ENCODE measurements at regions of chr19 and their contacts with region 1.

Region 1: DNA sequence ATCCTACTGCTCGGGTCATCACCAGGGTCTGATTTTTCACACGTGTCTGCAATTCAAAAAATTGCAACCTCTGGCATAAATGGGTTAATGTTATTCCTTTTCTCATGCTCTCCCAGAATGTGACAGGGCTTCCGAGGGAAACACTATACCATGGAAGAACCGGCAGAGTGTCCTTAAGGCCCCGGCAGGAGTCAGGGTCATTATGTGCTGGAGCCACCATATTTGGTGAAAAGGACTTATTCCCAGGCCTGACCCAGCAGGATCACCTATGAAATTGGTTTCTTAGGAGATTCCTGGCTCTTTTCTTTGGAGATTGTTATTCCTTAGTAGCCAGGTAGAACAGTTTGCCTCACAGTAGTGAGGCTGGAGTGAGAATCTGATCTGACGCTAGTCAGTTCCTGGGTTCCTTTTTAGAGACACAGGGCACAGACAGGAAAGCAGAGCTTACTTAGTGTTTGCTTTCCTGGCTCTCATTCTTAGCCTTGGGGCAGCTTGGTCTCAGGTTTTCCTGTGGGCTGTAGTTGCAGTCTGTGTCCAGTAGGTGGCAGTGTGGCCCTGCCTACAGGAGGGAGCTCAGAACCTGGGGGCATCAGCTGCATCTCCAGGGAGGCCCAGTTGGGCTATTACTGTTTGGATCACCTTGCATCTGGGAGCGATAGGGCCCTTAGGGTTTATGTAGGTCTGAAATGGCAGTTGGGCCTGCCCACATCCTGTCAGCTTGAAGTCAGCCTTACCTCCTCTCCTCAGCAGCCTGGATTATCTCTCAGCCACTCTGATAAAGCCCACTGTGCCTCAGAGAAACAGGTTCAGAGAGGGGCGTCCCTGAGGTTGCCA is 12.4 kb downstream of the SNRNP70 start:
- DNase-seq: peak; percentile 74 to 75
- H3K4me3 ChIP-seq: no peak overlapping the region
- H3K27ac ChIP-seq: 0 out of 2 replicates have a peak overlapping the region, but pooled peaks have one; percentile 31
- H3K4me1 ChIP-seq: no peaks in the 10 kb centered on the region; the same call in 1 of the 2 replicates
- H3K27me3 ChIP-seq: no peaks in the 10 kb centered on the region
- CTCF ChIP-seq: peak; percentile 100

Region 2: GRCh38 chr19:49085020-49085867 is 12.4 kb before region 1 on chr19 and contains the start of gene SNRNP70:
- CTCF ChIA-PET with region 1: no interaction called
- POLR2A ChIA-PET with region 1: no interaction called
- intact Hi-C with region 1: no loop called
- DNase-seq: peak; percentile 97 to 100
- H3K4me3 ChIP-seq: peak within 1 kb of the TSS; percentile 77
- H3K27ac ChIP-seq: peak within 1 kb of the TSS; percentile 41
- H3K4me1 ChIP-seq: peaks cover 15% of the 10 kb centered on the region
- H3K27me3 ChIP-seq: no peaks in the 10 kb centered on the region
- CTCF ChIP-seq: 0 out of 2 replicates have a peak, but pooled peaks have one; percentile 27
- total RNA-seq, gene SNRNP70: 151 and 199 TPM in 2 replicates

Region 3: GRCh38 chr19:49107625-49108459 is 10.2 kb after region 1 on chr19:
- CTCF ChIA-PET with region 1: no interaction called
- POLR2A ChIA-PET with region 1: no interaction called
- intact Hi-C with region 1: no loop called
- DNase-seq: no peak
- H3K4me3 ChIP-seq: no peak overlapping the region
- H3K27ac ChIP-seq: no peak overlapping the region
- H3K4me1 ChIP-seq: no peaks in the 10 kb centered on the region
- H3K27me3 ChIP-seq: no peaks in the 10 kb centered on the region
- CTCF ChIP-seq: no peak

Region 4: GRCh38 chr19:49127674-49128544 is 30.2 kb after region 1 on chr19:
- CTCF ChIA-PET with region 1: interaction called, 16 read pairs
- POLR2A ChIA-PET with region 1: no interaction called
- intact Hi-C with region 1: no loop called
- DNase-seq: peak; percentile 88 to 97
- H3K4me3 ChIP-seq: peak overlapping the region; percentile 50; the same call in 1 of the 2 replicates
- H3K27ac ChIP-seq: no peak overlapping the region
- H3K4me1 ChIP-seq: peaks cover 18% of the 10 kb centered on the region
- H3K27me3 ChIP-seq: no peaks in the 10 kb centered on the region
- CTCF ChIP-seq: no peak; the same call in 1 of the 2 replicates

Region 5: DNA sequence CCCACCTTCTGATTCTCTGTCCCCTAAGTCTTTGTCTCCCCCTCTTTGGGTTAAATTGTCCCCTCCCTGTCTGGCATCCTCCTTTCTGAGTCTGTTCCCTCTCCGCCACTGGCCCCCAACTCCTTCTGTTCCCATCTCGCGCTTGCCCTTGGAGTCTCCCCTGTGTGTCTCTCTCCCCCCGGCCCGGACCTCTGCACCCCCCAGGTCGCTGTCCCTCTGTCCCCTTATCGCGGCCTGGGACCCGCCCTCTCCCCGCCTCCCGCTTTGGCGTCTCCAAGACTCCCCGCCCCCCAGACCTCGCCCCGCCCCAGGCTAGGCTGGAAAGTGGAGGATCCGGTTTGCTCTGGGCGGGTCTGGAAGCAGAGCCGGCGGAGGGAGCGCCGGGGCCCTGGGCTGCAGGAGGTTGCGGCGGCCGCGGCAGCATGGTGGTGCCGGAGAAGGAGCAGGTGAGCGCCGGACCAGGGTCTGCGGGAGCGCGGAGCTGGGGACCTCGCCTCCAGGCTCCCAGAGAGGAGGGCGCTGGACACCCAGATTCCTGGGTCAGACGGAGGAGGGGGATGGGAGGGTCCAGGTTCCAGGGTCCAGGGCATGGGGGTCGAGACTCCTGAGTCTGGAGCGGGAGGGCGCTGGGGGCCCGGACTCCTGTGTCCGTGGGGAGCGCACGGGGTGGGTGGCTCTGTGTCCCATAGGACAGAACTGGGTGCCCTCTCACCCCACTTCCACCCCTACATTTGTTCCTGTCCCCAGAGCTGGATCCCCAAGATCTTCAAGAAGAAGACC is 60.0 kb after region 1 on chr19 and contains the start of gene TRPM4:
- CTCF ChIA-PET with region 1: no interaction called
- POLR2A ChIA-PET with region 1: no interaction called
- intact Hi-C with region 1: no loop called
- DNase-seq: peak; percentile 81 to 94
- H3K4me3 ChIP-seq: peak within 1 kb of the TSS; percentile 89
- H3K27ac ChIP-seq: no peak within 1 kb of the TSS
- H3K4me1 ChIP-seq: peaks cover 6% of the 10 kb centered on the region
- H3K27me3 ChIP-seq: no peaks in the 10 kb centered on the region
- CTCF ChIP-seq: no peak
- total RNA-seq, gene TRPM4: 43.8 and 62.3 TPM in 2 replicates

Region 6: DNA sequence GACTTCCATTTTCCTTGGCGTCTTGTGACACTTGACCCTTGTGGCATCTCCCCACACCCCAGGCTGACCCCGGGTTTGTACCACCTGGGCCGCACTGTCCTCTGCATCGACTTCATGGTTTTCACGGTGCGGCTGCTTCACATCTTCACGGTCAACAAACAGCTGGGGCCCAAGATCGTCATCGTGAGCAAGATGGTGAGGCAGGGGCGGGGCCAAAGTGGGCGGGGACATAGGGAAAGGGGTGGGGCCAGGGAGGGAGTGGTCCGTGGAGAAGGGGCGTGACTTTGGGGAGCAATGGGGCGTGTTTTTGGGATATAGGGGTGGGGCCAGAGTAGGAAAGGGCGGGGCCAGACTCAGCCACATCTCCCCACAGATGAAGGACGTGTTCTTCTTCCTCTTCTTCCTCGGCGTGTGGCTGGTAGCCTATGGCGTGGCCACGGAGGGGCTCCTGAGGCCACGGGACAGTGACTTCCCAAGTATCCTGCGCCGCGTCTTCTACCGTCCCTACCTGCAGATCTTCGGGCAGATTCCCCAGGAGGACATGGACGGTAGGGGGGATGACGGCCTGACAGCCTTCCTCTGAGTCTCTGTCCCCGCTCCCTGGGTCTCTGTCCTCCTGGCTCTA is 102.7 kb after region 1 on chr19:
- CTCF ChIA-PET with region 1: interaction called, 21 read pairs
- POLR2A ChIA-PET with region 1: interaction called, 5 read pairs
- intact Hi-C with region 1: loop called (anchors 5 kb)
- DNase-seq: no peak
- H3K4me3 ChIP-seq: no peak overlapping the region
- H3K27ac ChIP-seq: no peak overlapping the region
- H3K4me1 ChIP-seq: peaks cover 38% of the 10 kb centered on the region
- H3K27me3 ChIP-seq: no peaks in the 10 kb centered on the region
- CTCF ChIP-seq: no peak

Region 7: DNA sequence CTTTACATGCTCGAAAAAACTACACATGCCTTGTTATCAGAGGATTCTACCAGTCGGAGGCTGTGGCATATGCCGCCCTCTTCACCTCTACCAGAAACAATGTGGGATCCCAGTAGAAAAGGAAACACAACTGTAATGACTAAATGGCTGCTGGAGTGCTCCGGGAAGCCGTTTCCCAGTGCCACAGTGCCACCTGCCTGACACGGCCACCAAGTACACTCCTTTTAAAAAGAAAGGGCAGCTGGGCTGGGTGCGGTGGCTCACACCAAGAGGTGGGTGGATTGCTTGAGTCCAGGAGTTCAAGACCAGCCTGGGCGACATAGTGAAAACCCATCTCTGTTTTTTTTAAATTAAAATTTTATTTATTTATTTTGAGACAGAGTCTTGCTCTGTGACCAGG is 127.2 kb after region 1 on chr19:
- CTCF ChIA-PET with region 1: no interaction called
- POLR2A ChIA-PET with region 1: interaction called, 5 read pairs
- intact Hi-C with region 1: loop called (anchors 1 kb)
- DNase-seq: peak; percentile 73 to 84
- H3K4me3 ChIP-seq: no peak overlapping the region
- H3K27ac ChIP-seq: no peak overlapping the region
- H3K4me1 ChIP-seq: no peaks in the 10 kb centered on the region
- H3K27me3 ChIP-seq: no peaks in the 10 kb centered on the region
- CTCF ChIP-seq: peak; percentile 91

Measured in PC-9 (cell line).